ENCODE measurements at regions of chr1 and their contacts with region 1.

Region 1: DNA sequence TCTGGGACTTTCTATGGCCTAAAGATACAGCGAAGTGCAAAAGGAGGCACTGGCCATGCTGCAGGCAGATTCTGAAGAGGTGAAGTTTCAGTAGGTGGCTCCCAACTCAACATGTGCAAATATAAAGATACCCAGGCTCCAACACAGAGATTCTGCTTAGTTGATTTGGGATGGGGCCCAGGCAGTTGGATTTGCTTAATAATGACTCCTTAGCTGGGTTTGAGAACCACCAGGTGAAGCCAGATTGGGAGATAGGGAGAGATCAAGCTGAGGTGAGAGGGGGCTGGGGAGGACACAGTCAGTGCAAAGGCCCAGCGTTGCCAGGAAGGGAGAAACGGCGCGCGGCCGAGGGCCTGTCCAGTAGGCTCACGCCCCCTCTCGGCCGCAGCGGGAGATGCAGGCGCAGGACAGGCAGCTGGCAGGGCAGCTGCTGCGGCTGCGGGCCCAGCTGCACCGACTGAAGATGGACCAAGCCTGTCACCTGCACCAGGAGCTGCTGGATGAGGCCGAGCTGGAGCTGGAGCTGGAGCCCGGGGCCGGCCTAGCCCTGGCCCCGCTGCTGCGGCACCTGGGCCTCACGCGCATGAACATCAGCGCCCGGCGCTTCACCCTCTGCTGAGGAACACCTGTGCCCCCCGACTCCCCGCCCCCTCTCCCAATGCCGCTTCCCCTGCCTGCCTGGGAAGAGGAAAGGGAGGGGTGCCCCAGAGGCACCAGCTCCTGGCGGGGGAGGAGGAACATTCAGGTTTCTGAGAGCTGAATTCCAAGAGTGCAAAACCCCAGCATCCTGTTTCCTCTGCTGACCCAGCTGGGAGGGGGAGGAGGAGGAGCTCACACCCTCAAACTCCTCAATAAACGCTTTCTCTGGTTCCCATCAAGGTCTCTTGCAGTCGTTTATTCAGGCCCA is 1.2 kb downstream of the FAM167B start:
- DNase-seq: peak; percentile 91
- ATAC-seq: peak; percentile 11
- H3K4me3 Mint-ChIP-seq: peak overlapping the region; percentile 33
- H3K27ac Mint-ChIP-seq: peak overlapping the region; percentile 100
- H3K4me1 Mint-ChIP-seq: peaks cover 44% of the 10 kb centered on the region
- H3K27me3 Mint-ChIP-seq: no peaks in the 10 kb centered on the region

Region 2: GRCh38 chr1:32020339-32020738 is 227.9 kb before region 1 on chr1:
- CTCF ChIA-PET with region 1: no interaction called
- POLR2A ChIA-PET with region 1: interaction called, 12 read pairs
- intact Hi-C with region 1: no loop called
- DNase-seq: no peak
- ATAC-seq: no peak
- H3K4me3 Mint-ChIP-seq: no peak overlapping the region
- H3K27ac Mint-ChIP-seq: no peak overlapping the region
- H3K4me1 Mint-ChIP-seq: peaks cover 46% of the 10 kb centered on the region
- H3K27me3 Mint-ChIP-seq: no peaks in the 10 kb centered on the region

Region 3: DNA sequence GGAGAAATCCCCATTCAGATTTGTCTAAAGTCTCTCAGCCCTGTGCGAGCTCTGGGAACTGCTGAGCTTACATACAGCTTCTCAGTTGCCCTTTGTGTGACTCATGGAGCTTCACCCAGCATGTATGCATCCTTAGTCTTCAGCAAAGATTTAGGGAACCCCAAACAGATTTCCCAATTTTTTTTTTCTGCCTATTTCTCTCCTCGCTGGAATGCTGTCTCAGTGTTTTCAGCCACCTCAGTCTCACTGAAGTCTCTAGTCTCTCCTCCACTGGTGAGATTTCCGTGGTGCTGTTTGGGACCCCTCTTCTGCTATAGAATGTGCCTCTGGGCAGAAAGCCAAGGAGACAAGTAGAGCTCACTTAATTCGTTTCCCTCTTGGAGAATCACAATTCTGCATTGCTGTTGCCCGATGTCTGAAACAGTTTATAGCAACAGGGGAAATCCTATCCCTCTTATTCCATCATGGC is 96.9 kb before region 1 on chr1:
- CTCF ChIA-PET with region 1: no interaction called
- POLR2A ChIA-PET with region 1: no interaction called
- intact Hi-C with region 1: no loop called
- DNase-seq: no peak
- ATAC-seq: no peak
- H3K4me3 Mint-ChIP-seq: no peak overlapping the region
- H3K27ac Mint-ChIP-seq: no peak overlapping the region
- H3K4me1 Mint-ChIP-seq: peaks cover 15% of the 10 kb centered on the region
- H3K27me3 Mint-ChIP-seq: no peaks in the 10 kb centered on the region

Region 4: DNA sequence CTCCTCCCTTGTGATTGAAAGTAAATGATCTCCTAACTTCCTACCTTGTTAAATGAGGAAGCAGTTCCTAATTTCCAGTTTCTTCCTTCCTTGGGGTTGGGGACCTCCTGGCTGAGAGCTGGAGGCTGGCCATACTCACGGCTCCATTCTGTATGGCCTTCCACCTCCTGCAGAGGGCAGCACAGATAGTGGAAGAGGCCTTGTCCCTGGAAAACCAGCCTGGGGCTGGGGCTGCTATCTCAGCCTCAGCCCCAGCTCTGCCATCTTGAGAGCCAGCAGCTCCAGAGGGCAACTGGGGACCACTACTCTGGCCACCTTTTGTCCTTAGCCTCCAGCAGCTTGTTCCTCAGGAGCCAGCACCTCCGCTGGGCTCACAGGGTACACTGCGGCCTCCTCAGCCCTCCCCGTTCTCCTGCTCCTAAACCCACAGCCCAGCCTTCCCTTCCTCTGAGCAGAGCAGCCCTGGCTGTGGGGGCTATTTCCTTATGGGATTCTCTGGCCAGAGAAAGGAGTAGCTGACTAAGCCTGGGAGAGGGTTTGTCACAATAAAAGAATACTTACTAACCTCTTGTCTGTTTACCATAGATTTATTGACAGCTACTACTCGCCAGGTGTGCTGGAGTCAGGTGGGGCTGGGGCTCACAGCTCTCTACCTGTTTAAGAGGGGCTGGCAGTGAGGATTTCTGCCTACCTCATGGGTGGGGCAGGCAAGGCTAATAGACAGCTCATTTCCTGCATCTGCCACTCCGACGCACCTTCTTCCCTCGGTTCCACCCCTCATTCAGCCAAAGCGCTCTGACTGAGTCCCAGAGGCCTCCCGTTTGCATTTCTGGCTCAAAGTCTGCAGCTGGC is 32.4 kb before region 1 on chr1:
- CTCF ChIA-PET with region 1: interaction called, 20 read pairs
- POLR2A ChIA-PET with region 1: interaction called, 6 read pairs
- intact Hi-C with region 1: no loop called
- DNase-seq: peak; percentile 79
- ATAC-seq: peak; percentile 97
- H3K4me3 Mint-ChIP-seq: no peak overlapping the region
- H3K27ac Mint-ChIP-seq: peak overlapping the region; percentile 8
- H3K4me1 Mint-ChIP-seq: peaks cover 15% of the 10 kb centered on the region
- H3K27me3 Mint-ChIP-seq: no peaks in the 10 kb centered on the region

Region 5: DNA sequence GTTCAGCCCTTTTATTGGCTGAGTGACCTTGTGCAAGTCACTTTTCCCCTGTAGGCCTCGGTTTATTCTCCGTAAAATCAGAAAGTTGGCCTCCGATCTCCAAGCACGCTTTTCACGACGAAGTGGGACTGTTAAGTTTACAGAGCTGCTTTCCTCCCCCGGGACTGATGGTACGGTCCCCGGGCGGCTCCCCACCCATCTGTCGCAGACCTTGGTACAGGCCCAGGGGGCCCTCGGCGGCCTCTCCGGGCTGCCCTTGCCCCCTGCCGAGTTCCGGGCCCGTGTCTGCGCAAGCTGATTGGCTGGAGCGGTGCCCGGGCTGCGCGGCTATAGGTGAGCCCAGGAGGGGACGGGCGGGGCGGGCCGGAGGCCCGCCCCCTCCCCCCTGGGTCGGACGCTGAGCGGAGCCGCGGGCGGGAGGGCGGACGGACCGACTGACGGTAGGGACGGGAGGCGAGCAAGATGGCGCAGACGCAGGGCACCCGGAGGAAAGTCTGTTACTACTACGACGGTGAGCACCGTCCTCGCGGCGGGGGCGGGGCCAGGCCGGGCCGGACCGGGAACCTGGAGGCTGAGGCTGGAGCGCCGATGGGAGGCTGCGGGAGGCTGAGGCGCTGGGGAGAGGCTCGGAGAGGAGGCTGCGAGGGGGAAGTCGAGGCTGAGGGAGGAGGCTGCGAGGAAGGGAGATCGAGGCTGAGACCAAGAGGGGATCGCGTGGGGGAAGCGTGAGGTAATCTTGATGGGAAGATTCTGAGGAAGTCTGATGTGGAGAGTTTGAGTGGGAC is 43.7 kb after region 1 on chr1 and contains the start of gene HDAC1:
- CTCF ChIA-PET with region 1: interaction called, 4 read pairs
- POLR2A ChIA-PET with region 1: interaction called, 14 read pairs
- intact Hi-C with region 1: loop called (anchors 1 to 2 kb)
- DNase-seq: peak; percentile 99
- ATAC-seq: peak; percentile 98
- H3K4me3 Mint-ChIP-seq: peak within 1 kb of the TSS; percentile 100
- H3K27ac Mint-ChIP-seq: peak within 1 kb of the TSS; percentile 99
- H3K4me1 Mint-ChIP-seq: peaks cover 43% of the 10 kb centered on the region
- H3K27me3 Mint-ChIP-seq: no peaks in the 10 kb centered on the region
- total RNA-seq, gene HDAC1: 132 to 146 TPM

Region 6: GRCh38 chr1:32394141-32394889 is 146.1 kb after region 1 on chr1 and contains the start of gene BSDC1:
- CTCF ChIA-PET with region 1: interaction called, 3 read pairs
- POLR2A ChIA-PET with region 1: interaction called, 6 read pairs
- intact Hi-C with region 1: loop called in 1 of 2 experiments (anchors 1 kb)
- DNase-seq: peak; percentile 100
- ATAC-seq: peak; percentile 98
- H3K4me3 Mint-ChIP-seq: peak within 1 kb of the TSS; percentile 83
- H3K27ac Mint-ChIP-seq: peak within 1 kb of the TSS; percentile 98
- H3K4me1 Mint-ChIP-seq: peaks cover 19% of the 10 kb centered on the region
- H3K27me3 Mint-ChIP-seq: no peaks in the 10 kb centered on the region
- total RNA-seq, gene BSDC1: 29.4 to 36.9 TPM

Region 7: DNA sequence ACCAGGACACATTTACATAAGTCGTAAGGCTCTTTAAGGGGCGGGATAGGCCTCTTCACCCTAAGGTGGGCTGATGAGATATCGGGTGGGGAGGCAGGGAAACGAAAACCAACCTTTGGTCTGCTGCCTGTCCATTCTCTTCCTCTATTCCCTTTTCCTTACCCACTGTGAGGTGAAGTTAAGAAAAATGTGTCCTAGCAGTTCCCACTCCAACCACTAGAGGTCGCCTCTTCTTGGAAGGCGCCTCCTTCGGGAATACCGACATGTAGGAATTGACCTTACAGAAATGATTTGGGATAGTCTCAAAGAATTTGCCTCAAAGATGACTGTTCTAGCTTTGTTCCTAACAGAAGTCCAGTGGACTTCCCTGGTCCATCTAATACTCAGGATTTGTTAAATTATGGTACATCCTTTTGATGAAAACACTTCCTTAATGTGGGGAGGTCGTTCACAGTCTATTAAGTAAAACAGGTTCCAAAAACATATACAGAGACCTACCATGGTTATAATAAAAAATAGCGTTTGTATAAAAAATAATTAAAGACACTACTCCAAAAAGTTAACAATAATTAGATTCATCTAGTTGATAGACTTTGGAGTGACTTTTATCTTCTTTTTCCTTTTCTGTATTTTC is 846.9 kb after region 1 on chr1:
- CTCF ChIA-PET with region 1: no interaction called
- POLR2A ChIA-PET with region 1: no interaction called
- intact Hi-C with region 1: no loop called
- DNase-seq: peak; percentile 44
- ATAC-seq: no peak
- H3K4me3 Mint-ChIP-seq: no peak overlapping the region
- H3K27ac Mint-ChIP-seq: no peak overlapping the region
- H3K4me1 Mint-ChIP-seq: peaks cover 27% of the 10 kb centered on the region
- H3K27me3 Mint-ChIP-seq: no peaks in the 10 kb centered on the region

Measured in activated CD4-positive, alpha-beta T cell treated with anti-CD3 and anti-CD28 coated beads for 36 hours (primary cell).